SK-N-SH (cell line): ENCODE measurements at regions of chr11 and their contacts with region 1.

Region 1: GRCh38 chr11:120511116-120511819 is at the start of gene GRIK4:
- DNase-seq: peak; percentile 96
- H3K4me3 ChIP-seq: peak within 1 kb of the TSS; percentile 54 to 56; a peak in 3 of 4 replicates
- H3K27ac ChIP-seq: no peak within 1 kb of the TSS; a peak in 1 of 4 replicates
- H3K4me1 ChIP-seq: peaks cover 0 to 20% of the 10 kb centered on the region in 2 experiments; a peak in 1 of 4 replicates
- H3K27me3 ChIP-seq: peaks cover 18% of the 10 kb centered on the region; the same call in 1 of the 2 replicates
- CTCF ChIP-seq: peak; percentile 90
- EP300 ChIP-seq: no peak
- RAD21 ChIP-seq: peak; percentile 96
- polyA plus RNA-seq, gene GRIK4: 0.02 and 0.03 TPM in 2 replicates

Region 2: DNA sequence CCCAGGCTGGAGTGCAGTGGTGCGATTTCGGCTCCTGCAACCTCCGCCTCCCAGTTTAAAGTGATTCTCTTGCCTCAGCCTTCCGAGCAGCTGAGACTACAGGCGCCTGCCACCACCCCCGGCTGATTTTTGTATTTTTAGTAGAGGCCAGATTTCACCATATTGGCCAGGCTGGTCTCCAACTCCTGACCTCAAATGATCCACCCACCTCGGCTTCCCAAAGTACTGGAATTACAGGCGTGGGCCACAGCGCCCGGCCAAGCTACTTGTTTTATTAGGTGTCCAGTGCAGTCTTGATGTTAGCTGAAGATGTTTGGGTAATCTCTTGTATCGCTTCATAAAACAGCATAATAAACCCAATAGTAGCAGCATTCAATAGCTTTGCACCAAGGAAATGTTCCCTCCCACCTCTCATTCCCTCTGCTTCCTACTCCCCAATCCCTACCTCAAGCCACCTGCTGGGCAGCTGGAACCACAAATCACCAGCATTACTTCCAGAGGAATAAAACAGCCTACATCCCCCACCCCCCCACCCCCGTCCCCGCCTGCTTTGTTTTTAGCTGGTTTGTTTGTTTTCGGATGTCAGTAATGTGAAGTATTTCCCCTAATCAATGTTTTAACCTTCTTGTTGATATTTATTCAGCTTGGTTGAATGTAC is 10.7 kb before region 1 on chr11:
- CTCF ChIA-PET with region 1: interaction called, 42 read pairs
- POLR2A ChIA-PET with region 1: no interaction called
- DNase-seq: no peak
- H3K4me3 ChIP-seq: no peak overlapping the region
- H3K27ac ChIP-seq: no peak overlapping the region
- H3K4me1 ChIP-seq: no peaks in the 10 kb centered on the region
- H3K27me3 ChIP-seq: no peaks in the 10 kb centered on the region
- CTCF ChIP-seq: no peak
- EP300 ChIP-seq: no peak
- RAD21 ChIP-seq: no peak

Region 3: GRCh38 chr11:120554766-120555432 is 43.6 kb after region 1 on chr11:
- CTCF ChIA-PET with region 1: interaction called, 20 read pairs
- POLR2A ChIA-PET with region 1: no interaction called
- DNase-seq: peak; percentile 71
- H3K4me3 ChIP-seq: no peak overlapping the region
- H3K27ac ChIP-seq: peak overlapping the region in 1 of 2 experiments; percentile 92; a peak in 2 of 4 replicates
- H3K4me1 ChIP-seq: peaks cover 0 to 45% of the 10 kb centered on the region in 2 experiments; a peak in 2 of 4 replicates
- H3K27me3 ChIP-seq: no peaks in the 10 kb centered on the region
- CTCF ChIP-seq: no peak
- EP300 ChIP-seq: peak in 1 of 2 experiments; percentile 24; a peak in 2 of 4 replicates
- RAD21 ChIP-seq: peak; percentile 32

Region 4: DNA sequence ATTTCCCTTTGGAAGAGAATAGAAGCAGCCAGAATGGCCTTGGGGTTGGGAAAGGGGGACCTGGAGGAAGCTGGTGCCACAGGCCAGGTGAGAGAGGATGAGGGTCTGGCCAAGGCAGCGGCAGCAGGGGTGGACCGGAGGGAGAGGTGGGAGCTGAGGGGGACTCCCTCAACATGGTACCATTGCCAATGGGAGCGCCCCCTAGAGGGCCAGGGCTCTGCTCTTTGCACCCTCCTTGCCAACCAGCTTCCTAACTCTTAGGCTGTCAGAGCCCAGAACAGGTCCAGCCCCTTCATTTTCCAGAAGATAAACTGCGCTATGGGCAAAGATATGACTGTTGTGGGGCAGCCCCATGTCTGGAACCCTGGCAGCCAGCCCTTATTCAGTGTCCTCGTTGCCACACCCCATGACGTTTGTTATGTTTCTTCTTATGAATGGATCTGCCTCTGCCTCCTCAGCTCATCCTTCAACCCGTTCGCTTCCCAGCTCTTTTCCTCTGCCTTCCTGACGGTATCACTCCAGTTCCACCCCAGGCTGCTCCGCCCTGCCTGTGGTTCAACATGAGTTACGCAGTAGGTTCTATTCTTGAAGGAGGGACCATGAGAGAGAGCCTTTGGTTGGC is 185.4 kb after region 1 on chr11:
- CTCF ChIA-PET with region 1: interaction called, 15 read pairs
- POLR2A ChIA-PET with region 1: no interaction called
- DNase-seq: no peak
- H3K4me3 ChIP-seq: no peak overlapping the region
- H3K27ac ChIP-seq: no peak overlapping the region
- H3K4me1 ChIP-seq: no peaks in the 10 kb centered on the region; a peak in 1 of 4 replicates
- H3K27me3 ChIP-seq: no peaks in the 10 kb centered on the region
- CTCF ChIP-seq: peak; percentile 33; the same call in 1 of the 2 replicates
- EP300 ChIP-seq: no peak
- RAD21 ChIP-seq: no peak

Region 5: GRCh38 chr11:120807421-120808150 is 296.3 kb after region 1 on chr11:
- CTCF ChIA-PET with region 1: interaction called, 58 read pairs
- POLR2A ChIA-PET with region 1: no interaction called
- DNase-seq: no peak
- H3K4me3 ChIP-seq: no peak overlapping the region
- H3K27ac ChIP-seq: no peak overlapping the region
- H3K4me1 ChIP-seq: peaks cover 0 to 11% of the 10 kb centered on the region in 2 experiments; a peak in 1 of 4 replicates
- H3K27me3 ChIP-seq: no peaks in the 10 kb centered on the region
- CTCF ChIP-seq: no peak
- EP300 ChIP-seq: no peak
- RAD21 ChIP-seq: no peak

Region 6: GRCh38 chr11:121194731-121195596 is 683.7 kb after region 1 on chr11:
- CTCF ChIA-PET with region 1: interaction called, 31 read pairs
- POLR2A ChIA-PET with region 1: no interaction called
- DNase-seq: peak; percentile 69
- H3K4me3 ChIP-seq: no peak overlapping the region; a peak in 1 of 4 replicates
- H3K27ac ChIP-seq: no peak overlapping the region
- H3K4me1 ChIP-seq: peaks cover 0 to 2% of the 10 kb centered on the region in 2 experiments; a peak in 2 of 4 replicates
- H3K27me3 ChIP-seq: no peaks in the 10 kb centered on the region; the same call in 1 of the 2 replicates
- CTCF ChIP-seq: peak; percentile 90
- EP300 ChIP-seq: no peak
- RAD21 ChIP-seq: peak; percentile 86